ENCODE measurements at regions of chrX and their contacts with region 1.

Region 1: DNA sequence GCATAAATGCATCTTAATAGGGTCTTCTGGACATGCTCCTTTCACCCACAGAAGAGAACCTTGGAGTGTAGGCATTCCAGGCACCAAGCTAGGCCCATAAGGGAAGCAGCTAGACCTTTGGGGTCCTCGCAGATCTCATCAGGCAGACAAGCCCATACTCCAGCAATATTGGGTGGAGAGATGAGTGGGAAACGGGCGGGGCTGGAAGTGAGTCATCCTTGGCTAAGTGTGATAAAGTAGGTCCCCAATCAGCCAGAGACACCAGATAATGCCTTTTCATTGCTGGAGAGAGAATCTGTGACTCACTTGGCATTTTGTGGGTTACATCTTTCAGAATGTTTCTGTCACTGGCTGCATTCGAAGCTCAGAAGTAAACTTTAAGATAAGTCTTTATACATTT is 133.3 kb upstream of the MBNL3 start:
- DNase-seq: peak; percentile 1
- H3K4me3 Mint-ChIP-seq: no peak overlapping the region
- H3K27ac Mint-ChIP-seq: no peak overlapping the region
- H3K4me1 Mint-ChIP-seq: peaks cover 5% of the 10 kb centered on the region
- H3K27me3 Mint-ChIP-seq: no peaks in the 10 kb centered on the region

Region 2: DNA sequence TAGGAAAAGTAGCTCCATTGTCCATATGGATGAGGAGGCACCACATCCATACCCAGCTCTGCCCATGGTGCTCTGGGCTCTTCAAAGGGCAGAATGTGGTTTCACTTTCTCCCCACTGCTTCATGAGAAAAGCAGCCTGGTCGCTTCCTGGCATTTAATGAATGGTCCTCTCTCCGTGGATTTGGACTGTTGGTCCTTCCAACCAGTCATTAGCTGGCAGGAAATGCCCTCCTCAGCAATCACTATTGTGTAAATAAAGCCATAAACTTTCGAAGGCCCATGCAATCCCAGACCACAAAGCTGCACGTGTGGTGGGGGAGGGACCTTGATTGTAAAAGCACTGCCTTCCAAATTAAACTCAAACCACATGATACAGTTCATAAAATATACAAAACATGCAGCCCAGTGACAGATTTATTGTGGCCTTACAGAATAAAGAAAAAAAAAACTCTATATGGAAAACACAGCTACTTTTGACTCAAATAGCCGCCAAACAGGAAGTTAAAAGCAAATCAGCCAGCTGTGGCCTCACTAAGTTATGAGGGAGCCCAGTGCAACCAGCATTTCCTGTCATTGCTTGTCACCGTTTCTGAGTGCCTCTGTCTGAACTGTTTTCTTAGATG is 141.4 kb before region 1 on chrX:
- intact Hi-C with region 1: loop called (anchors 5 kb)
- DNase-seq: peak; percentile 11
- H3K4me3 Mint-ChIP-seq: peak overlapping the region; percentile 81
- H3K27ac Mint-ChIP-seq: peak overlapping the region; percentile 91
- H3K4me1 Mint-ChIP-seq: peaks cover 28% of the 10 kb centered on the region
- H3K27me3 Mint-ChIP-seq: no peaks in the 10 kb centered on the region